Upper lobe of right lung (tissue), 1 donor: ENCODE measurements at regions of chr14 and their contacts with region 1.

Region 1: GRCh38 chr14:103085106-103086091 is 1.4 kb downstream of the LBHD2 start:
- DNase-seq: no peak
- ATAC-seq: no peak
- H3K4me3 ChIP-seq: no peak overlapping the region
- H3K27ac ChIP-seq: no peak overlapping the region
- H3K4me1 ChIP-seq: no peaks in the 10 kb centered on the region
- H3K27me3 ChIP-seq: peaks cover 28% of the 10 kb centered on the region
- CTCF ChIP-seq: no peak

Region 2: DNA sequence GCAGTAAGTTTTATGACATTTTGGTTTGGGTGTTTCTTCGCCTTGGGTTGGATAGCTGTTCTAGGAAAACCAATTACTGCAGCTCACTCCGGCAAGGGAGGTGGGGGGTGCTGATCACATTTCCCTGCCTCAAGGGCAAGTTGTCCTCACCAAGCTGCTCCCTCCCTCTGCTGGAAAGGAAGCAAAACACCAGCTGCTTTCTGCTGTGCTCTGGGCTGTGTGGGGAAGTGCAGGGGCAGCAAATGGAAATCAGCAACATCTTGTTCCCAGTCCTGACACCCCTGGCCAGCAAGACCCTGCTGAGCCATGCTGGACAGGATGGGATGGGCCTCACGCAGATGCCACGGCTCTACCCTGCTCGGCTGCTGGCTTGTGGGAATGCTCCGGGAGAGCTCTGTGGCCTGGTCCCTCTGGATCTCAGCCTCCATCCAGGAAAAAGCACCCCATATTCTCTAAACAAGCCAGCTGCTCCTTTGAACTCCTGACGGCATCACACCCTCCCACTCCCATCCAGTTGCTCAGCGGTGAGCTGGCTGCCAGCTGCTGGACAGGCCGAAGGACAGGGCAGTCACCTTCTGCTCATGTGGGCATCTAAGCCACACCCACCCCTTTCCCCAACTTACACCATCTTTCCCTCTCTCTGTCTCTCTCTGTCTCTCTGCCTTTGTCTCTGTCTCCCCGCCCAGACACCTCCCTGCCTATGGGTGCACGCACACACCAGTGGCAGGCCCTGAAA is 196.3 kb after region 1 on chr14:
- intact Hi-C with region 1: loop called (anchors 10 kb)
- DNase-seq: no peak
- ATAC-seq: peak; percentile 59
- H3K4me3 ChIP-seq: no peak overlapping the region
- H3K27ac ChIP-seq: no peak overlapping the region
- H3K4me1 ChIP-seq: peaks cover 10% of the 10 kb centered on the region
- H3K27me3 ChIP-seq: peaks cover 37% of the 10 kb centered on the region
- CTCF ChIP-seq: peak; percentile 30